Endothelial cell of umbilical vein (primary cell): ENCODE measurements at regions of chr21 and their contacts with region 1.

Region 1: GRCh38 chr21:33199516-33200217 is 30.1 kb upstream of the IFNAR2 start:
- DNase-seq: peak; percentile 95
- H3K4me3 ChIP-seq: no peak overlapping the region
- H3K27ac ChIP-seq: no peak overlapping the region
- H3K4me1 ChIP-seq: no peaks in the 10 kb centered on the region
- H3K27me3 ChIP-seq: no peaks in the 10 kb centered on the region
- CTCF ChIP-seq: peak; percentile 66
- POLR2A ChIP-seq: no peak

Region 2: GRCh38 chr21:32834916-32835235 is 364.8 kb before region 1 on chr21:
- CTCF ChIA-PET with region 1: interaction called, 51 read pairs
- POLR2A ChIA-PET with region 1: no interaction called
- dilution Hi-C with region 1: no loop called
- intact Hi-C with region 1: loop called (anchors 5 kb)
- DNase-seq: no peak
- H3K4me3 ChIP-seq: no peak overlapping the region
- H3K27ac ChIP-seq: no peak overlapping the region
- H3K4me1 ChIP-seq: no peaks in the 10 kb centered on the region
- H3K27me3 ChIP-seq: peaks cover 8 to 36% of the 10 kb centered on the region in 2 experiments
- CTCF ChIP-seq: no peak
- POLR2A ChIP-seq: no peak

Region 3: DNA sequence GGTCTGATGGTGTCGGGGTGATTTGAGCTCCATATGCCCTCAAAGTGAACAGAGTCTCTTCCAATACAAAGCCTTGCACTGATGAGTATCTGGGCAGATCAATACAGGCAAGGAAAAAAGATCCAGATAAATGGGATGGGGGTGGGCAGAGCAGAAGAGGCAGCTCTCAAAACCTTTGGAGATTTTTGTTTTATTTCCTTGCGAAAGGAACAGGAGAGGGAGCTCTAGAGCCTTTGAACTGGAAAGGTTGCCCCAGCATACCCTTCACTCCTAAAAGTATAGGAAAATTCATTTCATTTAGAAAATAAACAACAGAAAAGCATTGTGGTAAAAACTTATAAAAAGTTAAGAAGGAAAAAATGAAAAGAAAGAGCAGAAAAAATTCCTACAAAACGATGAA is 205.4 kb before region 1 on chr21:
- CTCF ChIA-PET with region 1: interaction called, 53 read pairs
- POLR2A ChIA-PET with region 1: no interaction called
- dilution Hi-C with region 1: no loop called
- intact Hi-C with region 1: loop called (anchors 1 kb)
- DNase-seq: peak; percentile 27
- H3K4me3 ChIP-seq: no peak overlapping the region
- H3K27ac ChIP-seq: no peak overlapping the region
- H3K4me1 ChIP-seq: no peaks in the 10 kb centered on the region
- H3K27me3 ChIP-seq: peaks cover 17 to 37% of the 10 kb centered on the region in 2 experiments
- CTCF ChIP-seq: peak; percentile 38 to 44
- POLR2A ChIP-seq: no peak

Region 4: GRCh38 chr21:33219954-33220353 is 20.3 kb after region 1 on chr21:
- CTCF ChIA-PET with region 1: interaction called, 13 read pairs
- POLR2A ChIA-PET with region 1: no interaction called
- dilution Hi-C with region 1: no loop called
- intact Hi-C with region 1: no loop called
- DNase-seq: no peak
- H3K4me3 ChIP-seq: no peak overlapping the region
- H3K27ac ChIP-seq: no peak overlapping the region
- H3K4me1 ChIP-seq: no peaks in the 10 kb centered on the region
- H3K27me3 ChIP-seq: peaks cover 3 to 5% of the 10 kb centered on the region in 2 experiments
- CTCF ChIP-seq: no peak
- POLR2A ChIP-seq: no peak

Region 5: DNA sequence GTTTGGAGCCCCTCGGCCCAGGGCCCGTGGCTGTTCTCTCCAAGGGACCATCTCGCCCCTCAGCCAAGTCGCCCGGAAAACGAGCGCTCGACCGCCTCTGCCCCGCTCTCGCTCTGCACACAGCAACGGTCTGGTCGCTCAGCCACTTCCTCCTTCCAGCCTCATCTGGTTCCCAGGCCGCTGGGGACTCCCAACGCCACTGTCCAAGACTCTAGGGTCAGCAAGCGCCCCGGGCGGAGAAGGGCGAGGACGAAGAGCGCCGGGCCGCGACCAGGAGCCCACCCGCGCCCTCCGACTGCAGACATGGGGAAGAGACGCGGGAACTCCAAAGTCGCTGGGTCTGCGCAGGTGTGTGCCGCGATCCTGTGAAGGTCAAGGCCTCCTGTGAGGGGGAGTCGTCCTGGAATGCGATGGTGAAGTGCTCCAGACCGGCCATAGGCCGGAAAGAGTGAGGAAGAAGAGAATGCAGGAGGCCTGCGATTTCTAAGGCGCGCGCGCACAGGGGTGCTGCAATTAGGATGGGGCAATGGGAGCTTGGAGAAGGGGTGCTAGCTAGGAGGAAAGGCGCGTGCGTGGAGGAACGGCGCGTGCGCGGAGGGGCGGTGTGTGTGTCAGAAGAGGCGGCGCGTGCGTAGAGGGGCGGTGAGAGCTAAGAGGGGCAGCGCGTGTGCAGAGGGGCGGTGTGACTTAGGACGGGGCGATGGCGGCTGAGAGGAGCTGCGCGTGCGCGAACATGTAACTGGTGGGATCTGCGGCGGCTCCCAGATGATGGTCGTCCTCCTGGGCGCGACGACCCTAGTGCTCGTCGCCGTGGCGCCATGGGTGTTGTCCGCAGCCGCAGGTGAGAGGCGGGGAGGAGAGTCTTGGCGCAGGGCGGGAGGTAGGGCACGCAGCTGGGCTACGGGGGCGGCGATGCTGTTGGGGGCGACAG is 124.9 kb after region 1 on chr21 and contains the start of gene IFNAR1:
- CTCF ChIA-PET with region 1: interaction called, 22 read pairs
- POLR2A ChIA-PET with region 1: no interaction called
- dilution Hi-C with region 1: no loop called
- intact Hi-C with region 1: no loop called
- DNase-seq: peak; percentile 98
- H3K4me3 ChIP-seq: peak within 1 kb of the TSS; percentile 50 to 73 (median 65)
- H3K27ac ChIP-seq: peak within 1 kb of the TSS; percentile 46
- H3K4me1 ChIP-seq: peaks cover 11% of the 10 kb centered on the region
- H3K27me3 ChIP-seq: no peaks in the 10 kb centered on the region
- CTCF ChIP-seq: no peak
- POLR2A ChIP-seq: peak; percentile 93
- total RNA-seq, gene IFNAR1: 44.6 and 47.8 TPM in 2 replicates

Region 6: DNA sequence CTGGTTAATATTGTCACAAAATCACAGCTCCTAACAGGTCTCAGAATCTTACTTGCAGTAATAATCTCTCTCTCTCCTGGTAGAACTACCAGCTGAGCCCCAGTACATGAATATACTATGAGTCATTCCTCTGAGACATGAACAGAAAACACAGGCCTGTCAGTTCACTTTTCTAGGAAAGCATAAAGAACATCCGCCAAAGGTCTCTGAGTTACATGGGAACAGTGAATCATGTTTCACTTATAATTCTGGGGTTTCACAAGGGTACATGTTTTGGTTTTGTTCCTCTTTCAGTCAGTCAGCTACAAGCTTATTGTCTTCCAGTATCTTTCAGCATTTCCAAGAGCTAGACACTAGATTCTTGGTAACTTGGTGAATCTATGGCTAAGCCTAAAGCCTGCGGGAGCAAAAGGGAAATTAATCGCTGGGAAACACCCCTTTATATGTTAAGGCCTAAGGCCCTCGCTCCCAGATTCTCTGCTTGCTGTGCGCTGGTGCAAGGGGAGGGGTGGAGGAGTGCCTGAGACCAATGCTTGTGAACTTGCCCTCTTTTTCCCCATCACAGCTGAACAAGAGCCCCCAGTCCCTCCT is 235.2 kb after region 1 on chr21:
- CTCF ChIA-PET with region 1: interaction called, 16 read pairs
- POLR2A ChIA-PET with region 1: no interaction called
- dilution Hi-C with region 1: no loop called
- intact Hi-C with region 1: no loop called
- DNase-seq: peak; percentile 92
- H3K4me3 ChIP-seq: no peak overlapping the region
- H3K27ac ChIP-seq: peak overlapping the region; percentile 58
- H3K4me1 ChIP-seq: peaks cover 15% of the 10 kb centered on the region
- H3K27me3 ChIP-seq: no peaks in the 10 kb centered on the region
- CTCF ChIP-seq: no peak
- POLR2A ChIP-seq: no peak